ENCODE measurements at regions of chr17 and their contacts with region 1.

Region 1: GRCh38 chr17:50853015-50853615 is 13.0 kb downstream of the TOB1 start:
- DNase-seq: no peak
- H3K4me3 ChIP-seq: no peak overlapping the region
- H3K27ac ChIP-seq: no peak overlapping the region
- H3K4me1 ChIP-seq: peaks cover 0 to 4% (median 0%) of the 10 kb centered on the region in 4 experiments; a peak in 1 of 7 replicates
- H3K27me3 ChIP-seq: no peaks in the 10 kb centered on the region
- CTCF ChIP-seq: no peak
- EP300 ChIP-seq: no peak
- POLR2A ChIP-seq: no peak
- RAD21 ChIP-seq: no peak

Region 2: DNA sequence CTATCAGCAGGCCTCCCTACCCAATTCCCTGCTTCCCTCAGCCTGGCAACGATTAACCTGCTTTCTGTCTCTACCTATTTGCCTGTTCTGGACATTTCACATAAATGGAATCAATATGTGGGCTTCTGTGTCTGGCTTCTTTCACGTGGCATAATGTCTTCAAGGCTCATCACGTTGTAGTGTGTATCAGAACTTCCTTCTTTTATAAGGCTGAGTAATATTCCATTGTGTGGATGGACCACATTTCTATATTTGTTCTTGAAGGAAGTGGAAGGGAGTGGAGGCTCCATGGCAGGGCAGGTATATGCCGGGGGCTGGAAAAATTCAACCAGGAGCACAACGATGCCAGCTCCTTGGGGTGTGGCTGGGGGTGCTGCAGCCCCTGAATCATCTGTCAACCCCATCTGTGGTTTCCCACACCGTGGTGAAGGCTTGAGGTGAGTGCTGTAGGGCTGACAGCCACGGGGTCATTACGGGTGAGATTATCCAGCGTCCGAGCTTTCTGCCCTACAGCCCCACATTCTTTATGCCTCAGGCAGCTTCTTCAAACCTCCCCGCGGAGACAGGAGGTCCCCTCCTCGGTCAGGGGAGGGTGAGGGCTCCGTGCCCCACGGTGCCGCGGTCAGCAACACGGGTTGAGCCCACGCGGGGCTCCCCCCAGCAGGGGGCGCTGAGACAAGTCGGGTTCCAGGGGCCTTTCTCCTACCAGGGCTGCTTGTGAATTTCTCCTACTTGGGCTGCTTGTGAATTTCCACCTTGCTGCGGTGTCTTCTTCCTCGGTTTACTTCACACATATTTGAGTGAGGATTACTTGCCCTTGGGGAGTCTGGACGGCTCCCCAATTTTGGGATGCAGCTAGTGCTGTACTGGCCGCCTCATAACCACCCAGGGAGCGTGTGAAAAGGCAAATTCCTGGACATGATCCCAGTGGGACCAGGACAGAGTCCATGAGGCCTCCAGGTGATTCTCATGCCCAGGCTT is 36.1 kb before region 1 on chr17:
- CTCF ChIA-PET with region 1: interaction called, 13 read pairs
- POLR2A ChIA-PET with region 1: no interaction called
- DNase-seq: peak in 1 of 2 experiments; percentile 82
- H3K4me3 ChIP-seq: no peak overlapping the region
- H3K27ac ChIP-seq: no peak overlapping the region
- H3K4me1 ChIP-seq: peaks cover 0 to 5% (median 0%) of the 10 kb centered on the region in 4 experiments; a peak in 2 of 7 replicates
- H3K27me3 ChIP-seq: no peaks in the 10 kb centered on the region; a peak in 1 of 7 replicates
- CTCF ChIP-seq: peak; percentile 67 to 76 (median 68)
- EP300 ChIP-seq: no peak
- POLR2A ChIP-seq: no peak
- RAD21 ChIP-seq: peak; percentile 43 to 62

Region 3: GRCh38 chr17:50841949-50842354 is 11.2 kb before region 1 on chr17:
- CTCF ChIA-PET with region 1: interaction called, 77 read pairs
- POLR2A ChIA-PET with region 1: no interaction called
- DNase-seq: peak; percentile 53 to 90
- H3K4me3 ChIP-seq: no peak overlapping the region
- H3K27ac ChIP-seq: no peak overlapping the region
- H3K4me1 ChIP-seq: peaks cover 0 to 10% (median 4%) of the 10 kb centered on the region in 4 experiments; a peak in 3 of 7 replicates
- H3K27me3 ChIP-seq: no peaks in the 10 kb centered on the region
- CTCF ChIP-seq: peak; percentile 89 to 91 (median 90)
- EP300 ChIP-seq: no peak
- POLR2A ChIP-seq: no peak
- RAD21 ChIP-seq: peak; percentile 86 to 91

Region 4: GRCh38 chr17:50904521-50905459 is 51.7 kb after region 1 on chr17:
- CTCF ChIA-PET with region 1: interaction called, 12 read pairs
- POLR2A ChIA-PET with region 1: no interaction called
- DNase-seq: peak in 1 of 2 experiments; percentile 72
- H3K4me3 ChIP-seq: no peak overlapping the region
- H3K27ac ChIP-seq: peak overlapping the region; percentile 32; the same call in 1 of the 2 replicates
- H3K4me1 ChIP-seq: peaks cover 9 to 39% (median 28%) of the 10 kb centered on the region in 4 experiments
- H3K27me3 ChIP-seq: no peaks in the 10 kb centered on the region
- CTCF ChIP-seq: no peak
- EP300 ChIP-seq: no peak
- POLR2A ChIP-seq: no peak
- RAD21 ChIP-seq: no peak